Activated CD4-positive, alpha-beta T cell treated with anti-CD3 and anti-CD28 coated beads, Interleukin-2, amount 10 ng/mL, durations not matched to agents 24 days and 14 days (primary cell): ENCODE measurements at regions of chr22 and their contacts with region 1.

Region 1: GRCh38 chr22:30742291-30743256 is 47.9 kb downstream of the OSBP2 start:
- DNase-seq: peak; percentile 75
- H3K4me3 Mint-ChIP-seq: peak overlapping the region; percentile 15
- H3K27ac Mint-ChIP-seq: peak overlapping the region; percentile 93
- H3K4me1 Mint-ChIP-seq: peaks cover 62% of the 10 kb centered on the region
- H3K27me3 Mint-ChIP-seq: no peaks in the 10 kb centered on the region

Region 2: DNA sequence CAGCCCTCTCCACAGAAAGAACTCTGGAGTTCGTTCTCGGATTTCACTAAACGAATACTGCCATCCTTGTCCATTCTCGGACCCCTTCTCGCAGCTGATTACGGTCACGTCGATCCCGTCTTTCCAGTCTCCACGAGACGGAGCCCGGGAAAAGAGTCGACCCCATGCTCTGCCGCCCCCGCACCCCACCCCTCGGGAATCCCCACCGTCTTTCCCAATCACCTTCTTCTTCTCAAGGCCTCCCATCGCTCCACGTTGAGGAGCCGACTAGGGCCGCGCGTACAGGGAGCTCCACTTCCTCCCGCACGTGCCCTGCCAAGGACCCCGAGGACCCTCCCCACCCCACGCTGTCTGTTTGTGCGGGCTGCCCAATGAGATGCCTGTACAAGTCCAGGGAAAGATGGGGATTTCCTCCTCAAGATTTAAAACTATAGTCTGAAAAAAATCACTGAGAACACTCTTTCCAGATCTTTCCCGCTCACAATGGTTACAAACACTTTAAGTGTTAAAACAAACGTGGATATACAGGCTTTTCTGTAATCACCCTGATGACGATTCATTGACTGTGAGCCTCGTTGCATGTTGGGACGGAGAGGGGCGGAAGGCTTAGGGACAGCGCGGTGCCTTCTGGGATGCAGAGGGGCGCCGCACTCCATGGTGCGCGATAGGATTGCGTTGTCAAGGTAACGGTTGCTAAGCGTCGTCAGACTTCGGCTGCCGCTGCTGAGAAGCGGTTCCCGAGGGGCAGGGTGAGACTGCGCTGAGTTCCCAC is 150.8 kb before region 1 on chr22 and contains the start of gene PES1:
- intact Hi-C with region 1: loop called (anchors 5 kb)
- DNase-seq: peak; percentile 98
- H3K4me3 Mint-ChIP-seq: no peak within 1 kb of the TSS
- H3K27ac Mint-ChIP-seq: no peak within 1 kb of the TSS
- H3K4me1 Mint-ChIP-seq: no peaks in the 10 kb centered on the region
- H3K27me3 Mint-ChIP-seq: peaks cover 14% of the 10 kb centered on the region
- total RNA-seq, gene PES1: 170 and 173 TPM in 2 replicates

Region 3: GRCh38 chr22:30606455-30607299 is 135.9 kb before region 1 on chr22 and contains the start of gene TCN2:
- intact Hi-C with region 1: loop called (anchors 1 kb)
- DNase-seq: peak; percentile 78
- H3K4me3 Mint-ChIP-seq: peak within 1 kb of the TSS; percentile 86
- H3K27ac Mint-ChIP-seq: peak within 1 kb of the TSS; percentile 85
- H3K4me1 Mint-ChIP-seq: peaks cover 47% of the 10 kb centered on the region
- H3K27me3 Mint-ChIP-seq: no peaks in the 10 kb centered on the region
- total RNA-seq, gene TCN2: 0.35 and 0.45 TPM in 2 replicates

Region 4: GRCh38 chr22:30649430-30650007 is 93.1 kb before region 1 on chr22:
- intact Hi-C with region 1: loop called (anchors 1 kb)
- DNase-seq: peak; percentile 91
- H3K4me3 Mint-ChIP-seq: peak overlapping the region; percentile 40
- H3K27ac Mint-ChIP-seq: peak overlapping the region; percentile 92
- H3K4me1 Mint-ChIP-seq: peaks cover 38% of the 10 kb centered on the region
- H3K27me3 Mint-ChIP-seq: no peaks in the 10 kb centered on the region

Region 5: GRCh38 chr22:30667494-30668385 is 74.8 kb before region 1 on chr22 and contains the start of gene DUSP18:
- intact Hi-C with region 1: loop called (anchors 2 kb)
- DNase-seq: peak; percentile 98
- H3K4me3 Mint-ChIP-seq: peak within 1 kb of the TSS; percentile 93
- H3K27ac Mint-ChIP-seq: peak within 1 kb of the TSS; percentile 92
- H3K4me1 Mint-ChIP-seq: peaks cover 29% of the 10 kb centered on the region
- H3K27me3 Mint-ChIP-seq: peaks cover 2% of the 10 kb centered on the region
- total RNA-seq, gene DUSP18: 8.0 and 10.3 TPM in 2 replicates

Region 6: DNA sequence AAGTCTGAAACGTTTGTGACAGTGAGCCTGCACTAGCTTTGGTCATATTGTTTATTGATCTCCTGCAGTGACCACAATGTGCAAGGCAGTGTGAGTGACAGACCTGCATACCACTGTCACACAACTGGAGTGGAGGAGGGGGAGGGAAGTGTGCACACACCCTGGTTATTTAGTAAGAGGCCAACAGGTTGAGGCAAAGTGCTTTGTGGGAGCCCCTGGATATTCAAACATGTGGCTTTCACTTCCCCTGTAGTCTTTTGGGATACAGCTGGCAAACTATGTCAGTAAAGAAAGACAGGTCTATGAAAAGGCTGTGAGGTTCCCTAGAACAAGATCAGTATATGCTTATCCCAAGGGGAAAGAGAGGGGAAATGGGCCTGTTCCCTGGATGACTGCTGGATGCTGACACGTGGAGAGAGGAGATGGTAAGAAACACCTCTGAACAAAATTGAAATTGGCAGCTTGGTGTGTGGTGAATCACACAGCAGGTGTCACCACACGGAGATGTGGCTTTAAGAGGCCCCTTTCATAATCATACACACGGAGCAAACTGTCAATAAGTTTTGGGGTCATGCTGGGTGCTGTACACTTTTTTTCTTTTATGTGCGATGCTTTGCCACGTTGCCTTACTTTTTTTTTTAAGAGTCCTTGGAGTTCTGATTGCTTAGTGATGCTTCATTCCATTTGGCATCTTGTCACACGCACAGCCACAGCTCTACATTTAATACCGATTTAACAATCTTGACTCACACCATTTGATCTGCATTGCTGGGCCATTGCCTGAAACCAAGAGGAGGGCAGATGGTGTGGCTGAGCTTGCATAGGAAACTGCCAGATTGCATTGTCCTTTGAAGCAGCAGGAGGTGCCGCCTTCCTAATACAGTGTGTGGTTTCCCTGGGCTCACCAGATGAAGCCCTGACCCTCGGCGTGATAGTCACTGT is 36.6 kb before region 1 on chr22:
- intact Hi-C with region 1: loop called (anchors 1 kb)
- DNase-seq: peak; percentile 62
- H3K4me3 Mint-ChIP-seq: no peak overlapping the region
- H3K27ac Mint-ChIP-seq: peak overlapping the region; percentile 72
- H3K4me1 Mint-ChIP-seq: peaks cover 31% of the 10 kb centered on the region
- H3K27me3 Mint-ChIP-seq: no peaks in the 10 kb centered on the region